Natural killer cell (primary cell): ENCODE measurements at regions of chr10 and their contacts with region 1.

Region 1: GRCh38 chr10:124719213-124719851 is 24.8 kb downstream of the FAM53B start:
- DNase-seq: peak; percentile 56 to 91
- ATAC-seq: peak; percentile 34 to 60 (median 41)
- H3K4me3 ChIP-seq: no peak overlapping the region
- H3K4me3 Mint-ChIP-seq: peak overlapping the region; percentile 65
- H3K27ac ChIP-seq: peak overlapping the region; percentile 91
- H3K27ac Mint-ChIP-seq: peak overlapping the region; percentile 99
- H3K4me1 ChIP-seq: peaks cover 91% of the 10 kb centered on the region
- H3K4me1 Mint-ChIP-seq: peaks cover 92 to 97% of the 10 kb centered on the region in 2 donors
- H3K27me3 ChIP-seq: no peaks in the 10 kb centered on the region
- H3K27me3 Mint-ChIP-seq: no peaks in the 10 kb centered on the region
- CTCF ChIP-seq: peak; percentile 62

Region 2: GRCh38 chr10:124612611-124613498 is 106.5 kb before region 1 on chr10:
- intact Hi-C with region 1: loop called (anchors 5 kb)
- DNase-seq: peak in 1 of 2 donors; percentile 65
- ATAC-seq: peak in 2 of 3 donors; percentile 18 to 31
- H3K4me3 ChIP-seq: no peak overlapping the region
- H3K4me3 Mint-ChIP-seq: no peak overlapping the region
- H3K27ac ChIP-seq: peak overlapping the region; percentile 78
- H3K27ac Mint-ChIP-seq: peak overlapping the region; percentile 87 to 91
- H3K4me1 ChIP-seq: peaks cover 79% of the 10 kb centered on the region
- H3K4me1 Mint-ChIP-seq: peaks cover 29 to 63% of the 10 kb centered on the region in 2 donors
- H3K27me3 ChIP-seq: no peaks in the 10 kb centered on the region
- H3K27me3 Mint-ChIP-seq: no peaks in the 10 kb centered on the region
- CTCF ChIP-seq: no peak

Region 3: GRCh38 chr10:124650820-124651401 is 68.4 kb before region 1 on chr10:
- intact Hi-C with region 1: loop called (anchors 1 kb)
- DNase-seq: peak; percentile 81 to 87
- ATAC-seq: peak; percentile 57 to 77 (median 75)
- H3K4me3 ChIP-seq: no peak overlapping the region
- H3K4me3 Mint-ChIP-seq: peak overlapping the region; percentile 90
- H3K27ac ChIP-seq: peak overlapping the region; percentile 84
- H3K27ac Mint-ChIP-seq: peak overlapping the region; percentile 97 to 99
- H3K4me1 ChIP-seq: peaks cover 100% of the 10 kb centered on the region
- H3K4me1 Mint-ChIP-seq: peaks cover 56 to 90% of the 10 kb centered on the region in 2 donors
- H3K27me3 ChIP-seq: no peaks in the 10 kb centered on the region
- H3K27me3 Mint-ChIP-seq: no peaks in the 10 kb centered on the region
- CTCF ChIP-seq: no peak

Region 4: GRCh38 chr10:124703778-124704427 is 15.4 kb before region 1 on chr10:
- intact Hi-C with region 1: loop called (anchors 1 kb)
- DNase-seq: no peak
- ATAC-seq: no peak
- H3K4me3 ChIP-seq: no peak overlapping the region
- H3K4me3 Mint-ChIP-seq: peak overlapping the region; percentile 49
- H3K27ac ChIP-seq: peak overlapping the region; percentile 88
- H3K27ac Mint-ChIP-seq: peak overlapping the region; percentile 89 to 95
- H3K4me1 ChIP-seq: peaks cover 98% of the 10 kb centered on the region
- H3K4me1 Mint-ChIP-seq: peaks cover 91 to 94% of the 10 kb centered on the region in 2 donors
- H3K27me3 ChIP-seq: no peaks in the 10 kb centered on the region
- H3K27me3 Mint-ChIP-seq: no peaks in the 10 kb centered on the region
- CTCF ChIP-seq: no peak